Activated CD4-positive, alpha-beta memory T cell treated with anti-CD3 and anti-CD28 coated beads, Interleukin-2, amount 10 ng/mL, durations not matched to agents 7 days and 5 days (primary cell): ENCODE measurements at regions of chr17 and their contacts with region 1.

Region 1: DNA sequence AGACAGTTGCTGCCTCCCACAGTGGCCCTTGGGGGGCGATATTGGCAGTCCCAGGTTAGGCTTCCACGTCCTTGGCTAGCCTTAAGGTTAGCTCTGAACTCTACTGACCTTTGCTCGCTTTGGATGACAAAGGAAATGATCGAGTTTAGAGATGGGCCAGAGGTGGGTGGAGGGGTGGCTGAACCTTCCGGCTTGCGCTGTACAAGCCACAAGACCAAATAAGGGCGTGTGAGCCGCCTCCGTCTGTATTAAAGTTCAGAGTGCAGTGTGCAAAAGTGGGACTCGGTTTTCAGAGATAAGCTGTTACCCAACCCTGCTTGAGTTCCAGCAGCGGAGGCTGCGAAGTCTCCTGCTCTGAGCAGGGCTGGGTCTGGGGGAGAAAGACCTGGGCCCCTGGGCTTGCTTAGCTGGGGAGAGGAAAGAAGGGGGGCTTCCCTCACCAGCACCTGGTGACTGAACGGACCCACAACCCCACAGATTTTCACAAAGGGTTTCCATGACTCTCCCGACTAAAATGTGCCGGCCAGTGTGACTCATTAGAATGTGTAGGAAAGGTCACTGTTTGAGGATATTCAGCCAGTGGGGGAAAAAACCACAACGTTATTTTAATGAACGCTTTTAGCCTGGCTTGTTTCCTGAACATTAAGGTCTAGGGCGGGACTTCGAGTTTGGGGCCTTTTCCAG is 67.2 kb downstream of the CENPV start:
- DNase-seq: peak; percentile 89
- H3K4me3 Mint-ChIP-seq: peak overlapping the region; percentile 55
- H3K27ac Mint-ChIP-seq: peak overlapping the region; percentile 94
- H3K4me1 Mint-ChIP-seq: peaks cover 51% of the 10 kb centered on the region
- H3K27me3 Mint-ChIP-seq: no peaks in the 10 kb centered on the region

Region 2: DNA sequence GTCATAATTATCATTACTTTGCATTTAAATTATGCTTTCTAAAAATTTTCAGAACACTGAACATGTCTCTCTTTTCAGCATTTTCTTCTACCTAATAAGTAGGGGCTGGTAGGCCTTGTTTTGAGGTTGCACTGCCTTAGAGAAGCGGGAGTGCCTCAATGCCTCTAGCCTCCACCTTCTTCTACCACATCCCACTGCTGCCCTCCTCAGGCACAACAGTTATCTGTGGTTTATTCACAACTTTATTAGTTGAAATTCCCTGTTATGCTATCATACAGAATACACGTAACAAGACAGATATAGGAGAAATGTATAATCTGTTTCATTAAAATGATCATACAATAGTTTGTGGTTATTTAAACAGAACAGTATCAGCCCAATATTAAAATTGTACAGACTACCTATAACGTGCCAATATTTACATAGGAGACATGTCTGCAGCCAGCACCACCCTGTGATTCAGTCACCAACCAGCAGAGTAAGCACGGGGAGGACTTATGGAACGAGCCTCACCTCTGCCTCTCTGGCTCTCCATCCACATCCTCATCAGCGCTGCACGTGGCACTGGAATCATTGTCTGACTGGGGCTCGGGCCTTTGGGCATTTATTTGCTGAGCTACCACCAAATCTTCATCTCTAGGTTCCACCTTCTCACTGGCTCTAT is 185.2 kb before region 1 on chr17:
- CTCF ChIA-PET with region 1: no interaction called
- POLR2A ChIA-PET with region 1: no interaction called
- DNase-seq: no peak
- H3K4me3 Mint-ChIP-seq: no peak overlapping the region
- H3K27ac Mint-ChIP-seq: no peak overlapping the region
- H3K4me1 Mint-ChIP-seq: no peaks in the 10 kb centered on the region
- H3K27me3 Mint-ChIP-seq: no peaks in the 10 kb centered on the region

Region 3: DNA sequence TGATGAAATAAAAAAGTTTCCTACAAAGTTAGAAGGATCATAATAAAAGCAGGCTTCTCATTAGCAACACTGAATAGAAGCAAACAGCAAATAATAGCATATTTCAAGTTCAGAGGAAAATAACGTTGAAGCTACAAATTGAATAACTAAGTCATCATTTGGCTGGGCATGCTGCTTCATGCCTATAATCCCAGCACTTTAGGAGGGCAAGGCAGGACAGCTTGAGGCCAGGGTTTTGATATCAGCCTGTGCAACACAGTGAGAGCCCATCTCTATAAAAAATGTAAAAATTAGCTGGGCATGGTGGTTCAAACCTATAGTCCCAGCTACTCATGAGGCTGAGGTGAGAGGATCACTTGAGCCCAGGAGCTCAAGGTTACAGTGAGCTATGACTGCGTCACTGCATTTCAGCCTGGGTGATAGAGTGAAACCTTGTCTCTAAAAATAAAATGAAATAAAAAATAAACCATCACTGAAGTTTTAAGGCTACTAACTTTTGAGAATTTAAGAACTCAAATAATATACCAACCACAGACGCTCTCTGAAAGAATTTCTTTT is 96.2 kb before region 1 on chr17:
- CTCF ChIA-PET with region 1: no interaction called
- POLR2A ChIA-PET with region 1: no interaction called
- DNase-seq: no peak
- H3K4me3 Mint-ChIP-seq: no peak overlapping the region
- H3K27ac Mint-ChIP-seq: no peak overlapping the region
- H3K4me1 Mint-ChIP-seq: peaks cover 12% of the 10 kb centered on the region
- H3K27me3 Mint-ChIP-seq: no peaks in the 10 kb centered on the region

Region 4: GRCh38 chr17:16215273-16215964 is 70.7 kb before region 1 on chr17 and contains the start of gene NCOR1:
- CTCF ChIA-PET with region 1: interaction called, 3 read pairs
- POLR2A ChIA-PET with region 1: interaction called, 14 read pairs
- DNase-seq: peak; percentile 91
- H3K4me3 Mint-ChIP-seq: peak within 1 kb of the TSS; percentile 97
- H3K27ac Mint-ChIP-seq: peak within 1 kb of the TSS; percentile 77
- H3K4me1 Mint-ChIP-seq: peaks cover 49% of the 10 kb centered on the region
- H3K27me3 Mint-ChIP-seq: no peaks in the 10 kb centered on the region
- total RNA-seq, gene NCOR1: 136 to 141 TPM

Region 5: GRCh38 chr17:16258901-16259300 is 27.2 kb before region 1 on chr17:
- CTCF ChIA-PET with region 1: no interaction called
- POLR2A ChIA-PET with region 1: no interaction called
- DNase-seq: no peak
- H3K4me3 Mint-ChIP-seq: no peak overlapping the region
- H3K27ac Mint-ChIP-seq: no peak overlapping the region
- H3K4me1 Mint-ChIP-seq: peaks cover 7% of the 10 kb centered on the region
- H3K27me3 Mint-ChIP-seq: no peaks in the 10 kb centered on the region

Region 6: GRCh38 chr17:16269658-16270057 is 16.4 kb before region 1 on chr17:
- CTCF ChIA-PET with region 1: interaction called, 4 read pairs
- POLR2A ChIA-PET with region 1: interaction called, 13 read pairs
- DNase-seq: no peak
- H3K4me3 Mint-ChIP-seq: no peak overlapping the region
- H3K27ac Mint-ChIP-seq: no peak overlapping the region
- H3K4me1 Mint-ChIP-seq: peaks cover 27% of the 10 kb centered on the region
- H3K27me3 Mint-ChIP-seq: no peaks in the 10 kb centered on the region

Region 7: GRCh38 chr17:16304830-16305229 is 18.7 kb after region 1 on chr17:
- CTCF ChIA-PET with region 1: interaction called, 12 read pairs
- POLR2A ChIA-PET with region 1: interaction called, 3 read pairs
- DNase-seq: no peak
- H3K4me3 Mint-ChIP-seq: no peak overlapping the region
- H3K27ac Mint-ChIP-seq: no peak overlapping the region
- H3K4me1 Mint-ChIP-seq: no peaks in the 10 kb centered on the region
- H3K27me3 Mint-ChIP-seq: no peaks in the 10 kb centered on the region